ENCODE measurements at regions of chr2 and their contacts with region 1.

Region 1: GRCh38 chr2:56292951-56293350 is 109.2 kb downstream of the CCDC85A start:
- DNase-seq: no peak
- ATAC-seq: no peak
- H3K4me3 ChIP-seq: no peak overlapping the region
- H3K27ac ChIP-seq: no peak overlapping the region
- H3K4me1 ChIP-seq: no peaks in the 10 kb centered on the region
- H3K27me3 ChIP-seq: no peaks in the 10 kb centered on the region
- CTCF ChIP-seq: no peak

Region 2: DNA sequence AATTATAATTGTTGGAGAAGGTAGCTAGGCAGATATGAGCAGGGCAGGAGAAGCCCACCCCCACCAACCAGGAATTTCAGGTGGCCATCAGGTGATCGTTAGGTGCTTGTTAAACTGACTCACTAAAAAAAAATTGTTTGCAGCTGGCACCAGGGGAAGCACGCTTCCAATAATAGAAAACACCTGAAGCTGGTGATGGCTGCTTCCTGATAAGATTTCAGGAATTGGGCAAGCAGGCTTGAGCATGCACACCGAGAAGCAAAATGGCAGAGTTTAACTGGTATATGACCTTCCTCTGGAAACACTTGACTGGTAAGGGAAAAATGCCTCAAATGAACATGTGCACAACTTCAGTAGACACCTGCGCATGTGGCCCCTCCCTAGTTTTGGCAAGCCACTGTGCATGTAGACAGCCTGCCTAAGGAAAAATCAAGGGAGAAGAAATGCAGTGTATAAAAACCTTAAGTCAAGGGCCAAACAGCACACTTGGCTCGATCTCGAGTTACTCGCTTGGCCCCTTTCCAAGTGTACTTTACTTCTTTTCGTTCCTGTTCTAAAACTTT is 183.6 kb after region 1 on chr2:
- CTCF ChIA-PET with region 1: interaction called, 12 read pairs
- POLR2A ChIA-PET with region 1: no interaction called
- in situ Hi-C with region 1: no loop called
- intact Hi-C with region 1: no loop called
- DNase-seq: no peak
- ATAC-seq: no peak
- H3K4me3 ChIP-seq: no peak overlapping the region
- H3K27ac ChIP-seq: no peak overlapping the region
- H3K4me1 ChIP-seq: no peaks in the 10 kb centered on the region
- H3K27me3 ChIP-seq: no peaks in the 10 kb centered on the region
- CTCF ChIP-seq: no peak